ENCODE measurements at regions of chr10 and their contacts with region 1.

Region 1: DNA sequence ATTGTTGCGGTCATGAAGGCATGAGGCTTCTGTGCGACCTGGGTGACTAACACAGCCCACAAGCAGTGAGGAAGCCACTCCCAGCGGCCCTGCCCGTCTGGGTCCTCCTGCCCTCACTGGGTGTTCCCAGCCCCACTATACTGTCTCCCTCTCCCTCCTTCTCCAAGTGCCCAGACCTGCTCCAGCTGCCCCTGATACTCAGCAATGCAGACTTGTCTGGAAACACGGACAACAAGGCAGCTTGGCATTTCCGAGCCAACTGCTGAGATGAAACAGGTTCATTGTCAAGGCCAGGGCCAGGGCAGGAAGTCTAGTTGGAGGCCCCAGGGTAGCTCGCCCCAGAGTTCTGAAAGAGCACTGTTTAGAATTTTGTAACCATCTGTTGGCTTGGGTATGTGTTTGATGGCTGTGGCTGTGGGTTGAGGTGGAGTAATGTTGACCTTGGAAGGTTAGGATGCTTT is 95.7 kb downstream of the RBM20 start:
- DNase-seq: no peak
- ATAC-seq: peak in 1 of 2 donors; percentile 37

Region 2: DNA sequence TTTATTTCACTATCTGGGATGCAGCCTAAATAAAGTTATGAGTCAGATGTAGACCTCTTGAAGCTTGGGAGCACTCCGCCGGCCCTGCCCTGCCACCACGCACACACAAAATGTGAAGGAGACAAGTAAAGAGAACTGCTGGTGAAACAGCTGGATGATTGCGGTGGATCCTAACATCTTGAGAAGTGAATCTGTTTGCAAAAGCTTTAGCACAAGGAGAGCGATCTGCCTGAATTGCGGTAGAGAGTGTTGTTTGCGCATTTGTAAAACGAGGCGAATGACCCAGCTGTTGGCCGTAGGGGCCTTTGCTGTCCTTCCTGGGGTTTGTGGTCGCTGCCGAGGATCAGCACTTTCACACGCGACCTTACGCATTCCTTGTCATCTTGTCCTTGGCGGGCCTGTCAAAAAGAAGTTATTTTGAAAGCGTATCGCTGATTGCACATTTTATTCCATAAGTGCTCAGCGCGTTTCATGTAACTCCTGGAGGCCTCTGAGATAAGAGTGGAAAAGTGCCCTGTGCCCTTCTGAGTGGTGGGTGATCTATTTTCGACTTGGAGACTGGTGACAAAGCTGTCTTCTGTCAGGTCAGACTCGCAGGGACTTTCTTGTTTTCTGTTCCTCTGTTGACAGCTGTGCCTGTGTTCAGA is 54.9 kb before region 1 on chr10:
- intact Hi-C with region 1: loop called in 1 of 2 experiments (anchors 5 kb)
- DNase-seq: peak; percentile 34
- ATAC-seq: peak; percentile 82 to 90

Measured in left cardiac atrium (tissue), 4 donors.